ENCODE measurements at regions of chr17 and their contacts with region 1.

Region 1: GRCh38 chr17:10681866-10682446 is 15.4 kb downstream of the SCO1 start:
- DNase-seq: no peak
- H3K4me3 ChIP-seq: no peak overlapping the region
- CTCF ChIP-seq: no peak
- POLR2A ChIP-seq: no peak

Region 2: GRCh38 chr17:10663231-10663630 is 18.7 kb before region 1 on chr17:
- intact Hi-C with region 1: loop called (anchors 2 kb)
- DNase-seq: no peak
- H3K4me3 ChIP-seq: no peak overlapping the region
- CTCF ChIP-seq: no peak
- POLR2A ChIP-seq: no peak

Measured in lower leg skin (tissue), 4 donors.